Gastrocnemius medialis (tissue), 4 donors: ENCODE measurements at regions of chr22 and their contacts with region 1.

Region 1: DNA sequence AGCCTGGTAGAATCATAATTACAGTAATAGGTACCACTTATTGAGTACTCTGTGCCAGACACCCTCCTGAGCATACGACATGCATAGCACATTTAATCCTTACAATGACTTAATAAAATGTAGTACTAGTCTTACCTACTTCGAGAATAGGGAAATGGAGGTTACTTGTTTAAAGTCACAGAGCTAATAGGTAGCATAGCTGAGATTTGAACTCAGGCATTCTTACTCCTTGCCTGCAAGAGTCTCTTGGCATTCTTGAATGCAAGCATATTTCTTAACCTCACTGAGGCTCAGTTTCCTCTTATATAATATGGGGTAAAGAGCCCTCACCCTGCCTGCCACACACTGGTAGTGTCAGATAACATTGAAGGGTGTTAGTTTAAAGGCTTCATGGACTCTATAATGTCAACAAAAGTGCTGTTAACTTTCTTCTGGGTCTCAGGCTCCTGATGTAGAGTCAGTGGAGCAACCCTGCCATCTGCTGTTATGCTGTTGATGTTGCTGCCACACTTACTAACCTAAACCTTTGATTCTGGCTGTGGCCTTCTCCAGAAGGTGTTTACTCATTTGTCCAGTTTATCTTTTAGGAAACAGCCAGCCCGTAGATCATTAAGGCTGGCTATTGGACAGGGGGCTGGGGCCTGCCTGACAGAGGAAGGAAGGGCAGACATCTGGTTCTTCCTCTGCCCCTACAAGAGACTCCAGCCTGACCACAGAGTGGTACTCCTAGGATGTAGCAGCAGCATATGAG is 18.9 kb downstream of the LIMK2 start:
- DNase-seq: peak; percentile 35 to 69
- ATAC-seq: peak; percentile 74 to 79
- H3K4me3 ChIP-seq: no peak overlapping the region
- H3K27ac ChIP-seq: peak overlapping the region; percentile 86 to 88 (median 87)
- H3K4me1 ChIP-seq: peaks cover 28 to 36% of the 10 kb centered on the region in 2 donors
- H3K27me3 ChIP-seq: no peaks in the 10 kb centered on the region
- CTCF ChIP-seq: peak; percentile 70 to 84 (median 82)
- POLR2A ChIP-seq: no peak

Region 2: GRCh38 chr22:30947816-30948454 is 283.1 kb before region 1 on chr22:
- in situ Hi-C with region 1: no loop called
- intact Hi-C with region 1: loop called (anchors 5 kb)
- DNase-seq: no peak
- ATAC-seq: peak; percentile 59 to 71
- H3K4me3 ChIP-seq: no peak overlapping the region
- H3K27ac ChIP-seq: peak overlapping the region in 2 of 4 donors; percentile 39 to 41
- H3K4me1 ChIP-seq: peaks cover 0 to 14% of the 10 kb centered on the region in 2 donors
- H3K27me3 ChIP-seq: no peaks in the 10 kb centered on the region
- CTCF ChIP-seq: peak; percentile 20 to 58 (median 45)
- POLR2A ChIP-seq: no peak

Region 3: GRCh38 chr22:31089160-31090100 is 141.6 kb before region 1 on chr22:
- in situ Hi-C with region 1: loop called in 2 of 4 experiments (anchors 5 to 10 kb)
- intact Hi-C with region 1: loop called (anchors 1 kb)
- DNase-seq: peak; percentile 44 to 62
- ATAC-seq: peak; percentile 17 to 22
- H3K4me3 ChIP-seq: no peak overlapping the region
- H3K27ac ChIP-seq: peak overlapping the region; percentile 20 to 63 (median 54)
- H3K4me1 ChIP-seq: peaks cover 35 to 39% of the 10 kb centered on the region in 2 donors
- H3K27me3 ChIP-seq: no peaks in the 10 kb centered on the region
- CTCF ChIP-seq: peak; percentile 90 to 94 (median 93)
- POLR2A ChIP-seq: no peak

Region 4: DNA sequence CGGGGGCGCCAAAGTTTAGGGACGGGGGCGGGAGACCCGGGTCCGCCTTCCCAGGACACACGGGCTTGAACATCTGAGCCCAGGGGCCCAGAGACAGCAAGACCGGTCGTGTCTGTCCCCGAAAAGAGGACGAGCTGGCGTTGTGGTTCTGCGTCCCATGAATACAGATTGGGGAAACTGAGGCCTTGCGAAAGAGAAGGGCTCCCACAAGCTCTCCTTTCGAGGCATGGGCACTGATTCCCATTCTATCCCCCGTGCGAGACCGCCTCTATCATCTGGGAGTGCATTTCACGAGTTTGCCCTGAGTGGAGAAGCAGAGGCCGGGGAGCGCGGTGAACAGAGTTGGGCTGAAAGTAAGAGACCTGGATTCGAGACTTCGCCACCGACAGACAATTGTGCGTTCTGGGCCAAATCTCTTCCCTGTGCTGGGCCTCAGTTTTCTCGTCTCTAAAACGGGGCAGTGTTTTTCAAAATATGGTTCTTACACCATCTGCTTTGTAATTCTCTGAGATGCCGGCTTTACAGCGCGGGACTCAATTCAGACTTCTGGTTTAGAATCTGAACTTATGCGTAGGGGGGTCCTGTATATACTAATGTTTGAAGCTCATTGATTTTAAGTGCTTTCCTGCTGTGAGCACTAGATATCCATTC is 70.6 kb before region 1 on chr22:
- in situ Hi-C with region 1: loop called in 1 of 4 experiments (anchors 10 kb)
- intact Hi-C with region 1: loop called (anchors 5 kb)
- DNase-seq: no peak
- ATAC-seq: peak; percentile 60 to 64
- H3K4me3 ChIP-seq: peak overlapping the region; percentile 72 to 98 (median 87)
- H3K27ac ChIP-seq: peak overlapping the region; percentile 95 to 99 (median 97)
- H3K4me1 ChIP-seq: peaks cover 24 to 38% of the 10 kb centered on the region in 2 donors
- H3K27me3 ChIP-seq: no peaks in the 10 kb centered on the region
- CTCF ChIP-seq: no peak
- POLR2A ChIP-seq: no peak

Region 5: DNA sequence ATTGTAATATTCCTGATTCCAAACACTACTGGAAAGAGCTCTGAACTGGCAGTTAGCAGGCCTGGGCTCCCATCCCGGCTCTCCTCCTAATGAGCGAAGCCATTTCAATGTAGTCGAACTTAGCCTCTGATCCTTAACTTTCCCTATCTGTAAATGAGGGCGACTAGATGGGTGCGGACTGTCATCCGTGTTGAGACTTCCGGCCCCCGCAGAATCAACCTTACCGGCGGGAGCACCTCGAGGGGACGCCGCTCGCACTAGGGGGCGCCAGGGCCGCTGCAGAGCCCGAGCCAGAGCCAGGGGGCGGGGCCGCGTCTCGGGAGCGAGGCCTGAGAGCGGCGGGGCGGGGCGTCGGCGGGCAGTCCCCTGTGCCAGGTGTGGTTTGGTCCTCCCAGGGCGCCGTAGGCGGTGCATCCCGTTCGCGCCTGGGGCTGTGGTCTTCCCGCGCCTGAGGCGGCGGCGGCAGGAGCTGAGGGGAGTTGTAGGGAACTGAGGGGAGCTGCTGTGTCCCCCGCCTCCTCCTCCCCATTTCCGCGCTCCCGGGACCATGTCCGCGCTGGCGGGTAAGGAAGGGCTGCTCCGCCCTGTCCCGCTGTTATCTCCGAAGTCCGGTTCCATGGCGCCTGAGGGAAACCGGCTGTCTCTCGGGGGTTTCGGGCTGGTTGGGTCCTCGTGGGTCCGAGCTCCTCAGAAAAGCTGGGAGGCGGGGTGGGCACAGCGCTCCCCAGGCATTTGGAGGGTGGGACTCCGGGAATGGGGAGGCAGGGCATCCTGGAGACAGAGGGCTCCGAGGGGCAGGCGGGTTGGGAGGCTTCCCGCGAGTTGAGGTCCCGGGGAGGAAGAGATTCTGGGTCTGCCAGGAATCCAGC is 18.9 kb before region 1 on chr22 and contains the start of gene LIMK2:
- in situ Hi-C with region 1: no loop called
- intact Hi-C with region 1: loop called (anchors 1 kb)
- DNase-seq: peak; percentile 87 to 92
- ATAC-seq: peak; percentile 81 to 87
- H3K4me3 ChIP-seq: peak within 1 kb of the TSS; percentile 72 to 91 (median 85)
- H3K27ac ChIP-seq: peak within 1 kb of the TSS; percentile 85 to 88 (median 87)
- H3K4me1 ChIP-seq: peaks cover 20 to 24% of the 10 kb centered on the region in 2 donors
- H3K27me3 ChIP-seq: no peaks in the 10 kb centered on the region
- CTCF ChIP-seq: peak; percentile 69 to 92 (median 75)
- POLR2A ChIP-seq: peak; percentile 80 to 84
- total RNA-seq, gene LIMK2: 4.0 to 12.6 (median 7.1) TPM

Region 6: GRCh38 chr22:31425331-31426050 is 194.4 kb after region 1 on chr22:
- in situ Hi-C with region 1: no loop called
- intact Hi-C with region 1: no loop called
- DNase-seq: no peak
- ATAC-seq: no peak
- H3K4me3 ChIP-seq: no peak overlapping the region
- H3K27ac ChIP-seq: no peak overlapping the region
- H3K4me1 ChIP-seq: no peaks in the 10 kb centered on the region
- H3K27me3 ChIP-seq: no peaks in the 10 kb centered on the region
- CTCF ChIP-seq: no peak
- POLR2A ChIP-seq: no peak

Region 7: DNA sequence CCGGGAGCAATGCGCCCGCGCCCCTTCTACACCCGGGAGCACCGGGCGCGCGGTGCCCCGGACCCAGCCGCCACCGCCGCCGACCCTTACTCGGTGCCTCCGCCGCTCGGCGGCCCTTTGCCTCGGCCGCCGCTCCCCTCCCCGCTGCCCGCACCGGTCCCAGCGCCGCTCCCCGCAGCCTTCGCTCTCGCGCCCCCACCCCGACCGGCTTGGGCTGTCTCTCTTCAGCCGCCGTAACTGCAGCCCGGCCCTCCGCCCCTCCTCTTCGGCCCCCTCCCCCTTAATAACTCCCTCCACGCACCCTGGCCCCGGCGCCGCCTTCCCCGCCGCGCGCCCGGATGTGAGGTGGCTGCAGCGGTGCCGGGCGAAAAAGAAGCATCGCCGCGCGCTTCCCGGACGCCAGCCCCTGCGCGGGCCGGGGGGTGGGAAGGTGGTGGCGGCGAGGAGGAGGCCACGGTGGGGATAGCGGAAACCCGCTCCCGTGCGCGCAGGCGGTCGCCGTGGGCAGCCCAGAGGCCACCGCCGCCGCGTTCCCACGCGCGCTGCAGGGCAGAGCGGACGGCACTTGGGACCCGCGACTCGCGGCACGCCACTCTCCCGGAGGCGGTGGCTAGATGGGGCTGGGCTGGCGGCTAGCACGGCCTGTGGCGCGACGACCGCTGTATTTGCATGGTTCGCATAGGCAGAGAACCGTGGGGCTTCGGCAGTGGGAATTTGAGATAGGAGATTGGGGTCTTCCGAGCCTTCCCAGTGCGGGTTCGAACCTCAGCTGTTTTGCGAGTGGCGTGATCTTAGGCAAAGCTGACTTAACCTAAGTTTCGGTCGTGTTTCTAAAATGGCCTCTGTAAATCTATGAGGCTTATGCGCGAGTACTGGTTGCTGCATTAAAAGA is 258.8 kb after region 1 on chr22 and contains the start of gene EIF4ENIF1:
- in situ Hi-C with region 1: no loop called
- intact Hi-C with region 1: no loop called
- DNase-seq: peak; percentile 81 to 84
- ATAC-seq: peak; percentile 84 to 91
- H3K4me3 ChIP-seq: peak within 1 kb of the TSS; percentile 61 to 83 (median 78)
- H3K27ac ChIP-seq: peak within 1 kb of the TSS; percentile 86 to 99 (median 94)
- H3K4me1 ChIP-seq: peaks cover 22 to 31% of the 10 kb centered on the region in 2 donors
- H3K27me3 ChIP-seq: no peaks in the 10 kb centered on the region
- CTCF ChIP-seq: peak in 2 of 5 experiments; percentile 16 to 25
- POLR2A ChIP-seq: peak; percentile 71 to 75
- total RNA-seq, gene EIF4ENIF1: 10.1 to 19.6 (median 15.1) TPM